PC-9 (cell line): ENCODE measurements at regions of chr14 and their contacts with region 1.

Region 1: DNA sequence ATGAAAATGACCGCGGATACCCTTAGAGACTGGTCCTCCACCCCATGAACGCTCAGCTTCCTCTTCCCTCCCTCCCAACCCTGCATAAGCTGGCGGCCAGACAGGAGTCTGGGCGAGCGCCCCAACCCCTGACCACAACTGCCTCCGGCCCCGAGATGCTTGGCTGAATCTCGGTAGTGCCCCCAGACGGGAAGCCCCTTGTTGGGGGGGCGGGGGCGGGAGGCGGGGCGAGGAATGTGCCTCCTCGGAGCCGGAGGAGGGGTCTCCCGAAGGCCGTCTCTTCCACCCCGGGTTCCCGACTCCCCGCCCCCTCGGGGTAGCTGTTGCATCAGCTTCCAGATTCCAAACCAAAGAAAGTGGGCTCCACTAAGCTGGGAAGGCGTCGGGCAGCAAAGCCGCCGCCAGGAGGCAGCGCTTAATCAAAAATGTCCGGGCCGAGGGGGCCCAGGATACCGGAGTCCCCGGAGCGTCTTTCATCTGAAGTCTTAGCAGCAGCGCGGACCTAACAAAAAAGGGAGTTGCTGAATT is 7.1 kb upstream of the MRPL52 start:
- DNase-seq: peak in 1 of 2 experiments; percentile 44
- H3K4me3 ChIP-seq: no peak overlapping the region
- H3K27ac ChIP-seq: no peak overlapping the region
- H3K4me1 ChIP-seq: peaks cover 38% of the 10 kb centered on the region
- H3K27me3 ChIP-seq: no peaks in the 10 kb centered on the region
- CTCF ChIP-seq: no peak

Region 2: GRCh38 chr14:22589096-22589839 is 233.4 kb before region 1 on chr14 and contains the start of gene DAD1:
- CTCF ChIA-PET with region 1: no interaction called
- POLR2A ChIA-PET with region 1: interaction called, 10 read pairs
- intact Hi-C with region 1: no loop called
- DNase-seq: peak; percentile 95 to 97
- H3K4me3 ChIP-seq: peak within 1 kb of the TSS; percentile 87
- H3K27ac ChIP-seq: peak within 1 kb of the TSS; percentile 79
- H3K4me1 ChIP-seq: peaks cover 34% of the 10 kb centered on the region
- H3K27me3 ChIP-seq: no peaks in the 10 kb centered on the region
- CTCF ChIP-seq: no peak
- total RNA-seq, gene DAD1: 129 and 155 TPM in 2 replicates

Region 3: DNA sequence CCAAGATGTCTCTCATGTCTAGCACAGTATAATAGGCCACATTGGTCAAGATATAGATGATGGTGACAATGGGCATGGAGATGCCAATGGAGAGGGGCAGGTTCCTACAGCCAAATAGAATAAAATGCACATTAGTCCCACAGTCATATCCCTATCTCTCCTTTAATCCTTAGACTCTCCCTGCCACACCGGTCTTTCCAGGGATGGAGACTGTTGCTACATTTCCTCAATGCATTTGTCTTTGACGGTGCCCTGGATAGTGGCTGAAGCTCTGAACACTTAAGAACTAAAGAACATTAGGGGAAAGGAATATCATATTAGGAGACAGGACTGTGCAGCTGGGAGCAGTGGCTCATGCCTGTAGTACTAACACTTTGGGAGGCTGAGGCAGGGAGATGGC is 46.4 kb before region 1 on chr14:
- CTCF ChIA-PET with region 1: no interaction called
- POLR2A ChIA-PET with region 1: no interaction called
- intact Hi-C with region 1: loop called (anchors 2 kb)
- DNase-seq: no peak
- H3K4me3 ChIP-seq: no peak overlapping the region
- H3K27ac ChIP-seq: no peak overlapping the region
- H3K4me1 ChIP-seq: no peaks in the 10 kb centered on the region
- H3K27me3 ChIP-seq: no peaks in the 10 kb centered on the region
- CTCF ChIP-seq: no peak

Region 4: DNA sequence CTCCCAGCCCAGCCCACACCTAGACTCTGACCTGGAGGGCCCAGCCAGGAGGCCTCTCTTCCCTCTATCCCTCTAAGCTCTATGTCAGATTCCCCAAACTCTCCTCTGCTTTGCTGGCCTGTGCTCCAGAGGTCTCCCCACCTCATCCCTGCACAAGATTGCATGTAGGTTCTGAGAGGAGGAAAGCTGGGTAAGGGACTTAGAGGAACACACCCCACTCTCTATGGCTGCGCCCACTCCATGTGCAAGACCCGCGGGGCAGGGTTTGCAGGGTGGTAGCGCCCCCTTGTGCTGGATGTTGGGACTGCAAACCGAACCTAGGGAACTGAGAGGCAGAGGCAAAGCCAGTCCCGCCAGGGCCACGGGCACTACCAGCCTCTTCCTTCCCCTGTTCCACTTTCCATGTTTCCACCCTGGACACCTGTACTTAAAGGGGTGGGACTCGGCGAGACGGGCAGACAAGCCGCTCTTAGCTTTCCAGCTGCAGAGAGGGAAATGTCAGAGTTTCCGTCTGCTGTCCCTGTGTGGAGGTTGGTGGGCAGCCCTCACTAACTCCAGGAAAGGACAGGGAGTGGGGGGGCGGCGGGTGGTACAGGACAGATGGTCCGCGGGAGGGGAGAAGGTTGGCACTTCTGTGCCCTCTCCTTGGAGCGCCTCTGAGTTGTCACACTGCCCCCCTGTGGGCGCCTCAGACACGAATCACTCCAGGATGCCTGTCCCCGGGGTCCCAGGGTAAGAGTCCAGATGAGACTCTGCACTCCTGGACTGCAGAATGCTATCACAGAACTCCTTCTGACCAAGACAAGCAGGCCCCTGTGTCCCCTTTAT is 30.5 kb after region 1 on chr14:
- CTCF ChIA-PET with region 1: interaction called, 22 read pairs
- POLR2A ChIA-PET with region 1: no interaction called
- intact Hi-C with region 1: loop called (anchors 2 kb)
- DNase-seq: peak in 1 of 2 experiments; percentile 80
- H3K4me3 ChIP-seq: peak overlapping the region; percentile 48; the same call in 1 of the 2 replicates
- H3K27ac ChIP-seq: no peak overlapping the region
- H3K4me1 ChIP-seq: peaks cover 4% of the 10 kb centered on the region; the same call in 1 of the 2 replicates
- H3K27me3 ChIP-seq: no peaks in the 10 kb centered on the region
- CTCF ChIP-seq: peak; percentile 91

Region 5: DNA sequence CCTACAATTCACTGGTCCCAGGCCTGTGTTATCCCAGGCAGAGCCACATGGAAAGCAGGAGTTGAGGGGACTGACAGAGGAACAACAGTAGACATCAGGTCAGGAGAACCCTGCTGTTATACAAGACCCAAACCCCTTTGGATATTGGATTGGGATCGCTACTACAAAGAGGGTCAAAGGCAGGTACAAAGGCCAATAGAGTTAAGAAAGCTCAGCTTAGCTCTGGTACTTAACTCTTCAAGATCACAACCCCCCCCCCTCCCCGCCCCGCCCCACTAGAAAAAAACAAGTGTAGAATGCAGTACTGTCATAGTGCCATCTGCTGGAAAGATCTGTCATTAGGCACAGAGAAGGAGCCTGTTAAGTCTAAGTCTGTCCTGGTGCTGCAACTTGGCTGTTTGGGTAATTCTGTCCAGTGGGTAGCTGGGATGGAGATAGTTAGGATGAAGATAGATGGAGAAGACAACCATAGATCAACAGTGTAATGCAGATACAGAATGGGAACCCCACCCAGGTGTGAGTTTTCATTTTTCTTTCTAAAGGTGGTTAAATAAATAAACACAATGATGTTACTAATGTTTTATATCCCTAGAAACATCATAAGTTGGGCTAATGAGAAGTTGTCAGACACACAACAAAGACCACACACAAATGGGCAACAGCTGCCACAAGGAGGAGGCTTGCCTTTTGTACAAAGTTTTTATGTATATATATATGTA is 77.6 kb after region 1 on chr14:
- CTCF ChIA-PET with region 1: interaction called, 14 read pairs
- POLR2A ChIA-PET with region 1: no interaction called
- intact Hi-C with region 1: no loop called
- DNase-seq: peak; percentile 24 to 41
- H3K4me3 ChIP-seq: no peak overlapping the region
- H3K27ac ChIP-seq: no peak overlapping the region
- H3K4me1 ChIP-seq: peaks cover 15% of the 10 kb centered on the region
- H3K27me3 ChIP-seq: no peaks in the 10 kb centered on the region
- CTCF ChIP-seq: peak; percentile 62